OCI-LY7 (cell line): ENCODE measurements at regions of chr7 and their contacts with region 1.

Region 1: GRCh38 chr7:75599244-75599781 is 107.2 kb downstream of the SPDYE5 start:
- DNase-seq: no peak
- H3K4me3 ChIP-seq: no peak overlapping the region
- H3K27ac ChIP-seq: no peak overlapping the region
- H3K4me1 ChIP-seq: no peaks in the 10 kb centered on the region
- CTCF ChIP-seq: no peak

Region 2: DNA sequence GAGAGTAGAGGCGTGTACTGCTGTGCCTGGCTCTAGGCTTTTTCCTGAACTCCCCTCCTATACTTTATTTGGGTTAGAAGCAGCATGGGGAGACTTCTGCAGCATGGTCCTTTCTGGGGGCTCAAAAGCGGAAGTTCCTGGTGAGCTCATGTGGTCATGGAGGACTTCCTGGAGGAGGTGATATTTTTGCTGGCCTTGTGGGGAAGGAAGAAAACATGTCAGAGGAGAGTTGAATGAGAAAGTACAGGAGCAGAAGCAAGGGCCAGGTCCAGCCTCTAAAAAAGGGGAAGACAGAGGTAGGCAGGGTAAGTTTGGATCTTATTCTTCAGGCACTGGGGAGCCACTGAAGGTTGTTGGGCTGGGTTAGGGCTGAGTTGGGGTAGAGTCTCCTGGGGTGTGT is 589.3 kb before region 1 on chr7:
- CTCF ChIA-PET with region 1: no interaction called
- POLR2A ChIA-PET with region 1: no interaction called
- intact Hi-C with region 1: no loop called
- DNase-seq: no peak
- H3K4me3 ChIP-seq: no peak overlapping the region
- H3K27ac ChIP-seq: no peak overlapping the region
- H3K4me1 ChIP-seq: no peaks in the 10 kb centered on the region
- CTCF ChIP-seq: no peak

Region 3: DNA sequence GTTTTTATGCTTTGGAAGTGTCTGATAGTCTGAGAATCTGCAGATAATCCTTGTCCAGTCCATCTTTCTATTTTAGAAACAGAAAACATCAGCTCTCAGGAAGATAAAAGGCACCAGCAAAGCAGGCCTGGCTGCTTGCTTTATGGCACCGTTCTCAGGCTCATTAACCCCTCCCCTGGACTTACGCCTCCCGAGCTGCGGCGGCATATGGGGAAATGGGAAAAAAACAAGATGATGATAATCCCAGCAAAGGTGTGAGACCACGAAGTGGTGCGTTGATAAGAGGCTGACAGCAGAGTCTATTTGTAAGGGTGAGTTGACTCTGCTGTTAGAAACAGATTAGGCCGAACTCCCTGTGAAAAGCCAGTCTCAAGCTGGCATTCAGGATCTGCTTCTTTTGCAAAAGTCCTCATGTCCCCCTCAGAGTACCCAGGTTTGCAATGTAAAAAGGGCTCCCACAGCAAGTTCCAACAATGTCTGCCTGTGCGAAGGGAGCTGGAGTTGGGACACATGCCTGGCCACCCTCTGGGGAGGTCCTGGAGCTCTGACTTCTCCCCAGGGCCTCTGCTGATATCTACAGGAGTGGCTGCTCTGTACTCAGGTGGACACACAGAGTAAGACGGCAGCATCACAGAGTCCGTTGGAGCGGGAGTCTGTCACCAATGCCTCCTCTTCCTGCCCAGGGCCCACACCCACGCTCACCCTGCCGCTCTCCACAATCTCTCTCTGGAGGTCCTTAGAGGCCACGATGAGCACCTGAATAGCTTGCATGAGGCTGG is 52.9 kb before region 1 on chr7:
- CTCF ChIA-PET with region 1: no interaction called
- POLR2A ChIA-PET with region 1: no interaction called
- intact Hi-C with region 1: loop called (anchors 10 kb)
- DNase-seq: no peak
- H3K4me3 ChIP-seq: no peak overlapping the region
- H3K27ac ChIP-seq: no peak overlapping the region
- H3K4me1 ChIP-seq: no peaks in the 10 kb centered on the region
- CTCF ChIP-seq: no peak

Region 4: GRCh38 chr7:75679060-75679459 is 79.7 kb after region 1 on chr7:
- CTCF ChIA-PET with region 1: no interaction called
- POLR2A ChIA-PET with region 1: no interaction called
- intact Hi-C with region 1: no loop called
- DNase-seq: no peak
- H3K4me3 ChIP-seq: no peak overlapping the region
- H3K27ac ChIP-seq: no peak overlapping the region
- H3K4me1 ChIP-seq: no peaks in the 10 kb centered on the region
- CTCF ChIP-seq: no peak